ENCODE measurements at regions of chrX and their contacts with region 1.

Region 1: GRCh38 chrX:83160096-83160495 is 348.0 kb upstream of the POU3F4 start:
- DNase-seq: peak; percentile 17 to 30
- H3K4me3 ChIP-seq: no peak overlapping the region
- H3K4me3 Mint-ChIP-seq: peak overlapping the region; percentile 17
- H3K27ac Mint-ChIP-seq: peak overlapping the region; percentile 66
- H3K4me1 ChIP-seq: peaks cover 10% of the 10 kb centered on the region
- H3K4me1 Mint-ChIP-seq: peaks cover 14% of the 10 kb centered on the region
- H3K27me3 ChIP-seq: no peaks in the 10 kb centered on the region
- H3K27me3 Mint-ChIP-seq: no peaks in the 10 kb centered on the region
- CTCF ChIP-seq: no peak

Region 2: DNA sequence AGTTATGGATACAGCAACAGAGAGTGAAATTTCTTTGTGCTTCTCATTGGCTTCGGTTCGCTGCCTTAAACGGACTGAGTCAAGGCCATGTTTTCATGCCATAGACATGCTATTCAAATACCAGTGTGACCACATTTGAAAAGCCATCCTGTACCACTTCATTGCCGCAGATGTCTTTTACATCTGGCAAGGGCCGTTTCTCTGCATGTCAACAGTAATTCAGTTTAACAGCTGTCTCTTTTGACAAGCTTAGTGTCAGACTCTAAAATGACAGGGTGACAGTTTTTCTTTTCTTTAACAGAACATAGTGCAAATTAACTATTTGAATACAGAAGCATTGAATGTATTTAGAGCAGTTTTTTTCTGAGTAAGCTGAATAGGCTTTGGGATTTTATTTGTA is 14.2 kb before region 1 on chrX:
- CTCF ChIA-PET with region 1: no interaction called
- POLR2A ChIA-PET with region 1: no interaction called
- intact Hi-C with region 1: loop called (anchors 2 kb)
- DNase-seq: no peak
- H3K4me3 ChIP-seq: no peak overlapping the region
- H3K4me3 Mint-ChIP-seq: no peak overlapping the region
- H3K27ac Mint-ChIP-seq: no peak overlapping the region
- H3K4me1 ChIP-seq: no peaks in the 10 kb centered on the region
- H3K4me1 Mint-ChIP-seq: peaks cover 7% of the 10 kb centered on the region
- H3K27me3 ChIP-seq: no peaks in the 10 kb centered on the region
- H3K27me3 Mint-ChIP-seq: no peaks in the 10 kb centered on the region
- CTCF ChIP-seq: no peak

Measured in Caco-2 (cell line).